Posterior vena cava (tissue), 2 donors: ENCODE measurements at regions of chr2 and their contacts with region 1.

Region 1: DNA sequence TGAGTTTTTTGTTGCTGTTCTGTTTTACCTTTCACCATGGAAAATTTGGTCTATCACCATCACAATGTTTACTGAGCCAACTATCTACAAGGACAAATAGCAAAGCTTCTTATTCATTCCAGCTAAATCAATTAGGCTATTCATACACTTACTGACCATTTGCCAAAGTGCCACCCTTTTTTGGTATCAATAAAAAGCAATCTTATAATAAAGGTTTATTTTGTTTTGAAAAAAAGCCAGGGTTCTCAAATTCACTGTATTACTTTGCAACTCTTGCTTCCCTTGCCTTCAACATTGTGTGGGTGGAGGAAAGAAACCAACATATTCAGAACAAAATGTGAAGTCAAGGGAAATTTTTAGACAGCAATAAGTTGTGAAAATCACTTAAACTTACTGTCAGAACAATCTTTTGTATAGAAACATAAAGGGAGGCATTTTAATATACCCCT is 15.3 kb downstream of the PELI1 start:
- DNase-seq: no peak

Region 2: DNA sequence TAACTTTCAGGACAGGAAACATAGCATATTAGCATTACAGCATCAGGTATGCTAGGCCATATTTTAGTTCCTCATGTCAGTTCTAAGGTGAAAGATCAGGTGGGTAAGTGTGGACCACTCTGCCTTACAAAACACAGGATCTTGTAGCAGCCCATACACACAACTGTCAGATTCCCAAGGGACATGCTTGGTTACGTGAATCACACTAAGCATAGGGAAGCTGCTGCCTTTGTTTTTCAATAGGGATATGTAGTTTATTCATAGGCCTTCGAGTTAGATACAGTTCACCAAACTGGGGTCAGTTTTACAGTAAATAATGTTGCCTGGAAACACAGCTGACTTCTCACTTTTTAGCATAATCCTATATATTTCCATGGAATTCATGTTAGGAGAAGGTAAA is 1194.5 kb before region 1 on chr2:
- intact Hi-C with region 1: no loop called
- DNase-seq: no peak

Region 3: GRCh38 chr2:63287956-63288355 is 841.0 kb before region 1 on chr2:
- intact Hi-C with region 1: no loop called
- DNase-seq: no peak

Region 4: DNA sequence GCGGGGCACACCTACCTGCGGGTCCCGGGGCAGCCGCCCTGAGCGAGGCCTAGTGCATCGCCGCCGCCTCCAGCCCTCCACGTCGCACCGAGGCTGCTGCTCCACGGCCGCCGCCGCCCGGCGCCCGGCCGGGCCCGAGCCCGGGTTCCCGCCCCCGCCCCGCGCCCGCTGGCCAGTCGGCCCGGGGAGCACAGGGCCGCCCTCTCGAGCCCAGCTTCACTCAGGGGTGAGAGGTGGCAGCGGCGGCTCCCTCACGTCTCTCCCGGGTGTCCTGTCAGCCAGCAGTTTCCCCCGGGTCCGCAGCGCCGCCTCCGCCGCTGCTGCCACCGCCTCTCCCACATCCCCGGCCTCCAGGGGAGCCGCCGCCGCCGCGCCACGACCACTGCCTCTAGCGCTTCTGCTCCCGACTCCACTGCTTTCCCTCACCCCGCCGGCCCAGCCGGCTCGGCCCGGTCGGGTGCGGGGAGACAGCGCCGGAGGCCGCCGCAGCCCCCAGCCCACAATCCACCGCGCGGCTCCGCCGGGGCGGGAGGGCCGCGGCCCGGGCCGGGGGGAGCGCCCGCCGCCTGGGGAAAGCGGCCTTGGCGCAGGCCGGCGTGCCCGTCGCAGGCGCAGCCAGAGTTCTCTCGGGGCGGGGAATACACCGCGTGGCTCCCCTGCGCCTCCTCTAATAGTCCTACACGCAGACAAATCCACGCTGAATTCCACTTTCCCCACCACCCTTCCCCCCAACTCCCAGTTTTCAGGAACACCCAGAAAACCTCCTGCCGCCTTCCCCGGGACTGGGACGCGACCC is 109.8 kb before region 1 on chr2 and contains the start of gene VPS54:
- intact Hi-C with region 1: no loop called
- DNase-seq: peak; percentile 91
- total RNA-seq, gene VPS54: 18.7 to 22.9 TPM

Region 5: DNA sequence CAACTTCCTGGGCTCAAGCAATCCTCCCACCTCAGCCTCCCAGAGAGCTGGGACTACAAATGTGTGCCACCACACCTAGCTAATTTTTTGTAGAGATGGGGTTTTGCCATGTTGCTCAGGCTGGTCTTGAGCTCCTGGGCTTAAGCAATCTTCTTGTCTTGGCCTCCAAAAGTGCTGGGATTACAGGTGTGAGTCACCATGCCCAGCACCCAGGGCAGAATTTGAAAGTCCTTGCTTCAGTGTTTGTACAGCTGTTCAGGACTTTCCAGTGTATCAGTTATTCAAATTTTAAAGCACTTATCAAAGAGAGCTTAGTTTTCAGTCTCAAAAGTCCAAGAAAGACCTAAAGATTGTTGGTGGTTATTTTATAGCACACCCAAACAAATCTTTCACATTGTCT is 66.1 kb before region 1 on chr2:
- intact Hi-C with region 1: no loop called
- DNase-seq: no peak

Region 6: GRCh38 chr2:64157792-64158191 is 28.8 kb after region 1 on chr2:
- intact Hi-C with region 1: loop called in 1 of 2 experiments (anchors 2 kb)
- DNase-seq: no peak